Panc1 (cell line): ENCODE measurements at regions of chr20 and their contacts with region 1.

Region 1: DNA sequence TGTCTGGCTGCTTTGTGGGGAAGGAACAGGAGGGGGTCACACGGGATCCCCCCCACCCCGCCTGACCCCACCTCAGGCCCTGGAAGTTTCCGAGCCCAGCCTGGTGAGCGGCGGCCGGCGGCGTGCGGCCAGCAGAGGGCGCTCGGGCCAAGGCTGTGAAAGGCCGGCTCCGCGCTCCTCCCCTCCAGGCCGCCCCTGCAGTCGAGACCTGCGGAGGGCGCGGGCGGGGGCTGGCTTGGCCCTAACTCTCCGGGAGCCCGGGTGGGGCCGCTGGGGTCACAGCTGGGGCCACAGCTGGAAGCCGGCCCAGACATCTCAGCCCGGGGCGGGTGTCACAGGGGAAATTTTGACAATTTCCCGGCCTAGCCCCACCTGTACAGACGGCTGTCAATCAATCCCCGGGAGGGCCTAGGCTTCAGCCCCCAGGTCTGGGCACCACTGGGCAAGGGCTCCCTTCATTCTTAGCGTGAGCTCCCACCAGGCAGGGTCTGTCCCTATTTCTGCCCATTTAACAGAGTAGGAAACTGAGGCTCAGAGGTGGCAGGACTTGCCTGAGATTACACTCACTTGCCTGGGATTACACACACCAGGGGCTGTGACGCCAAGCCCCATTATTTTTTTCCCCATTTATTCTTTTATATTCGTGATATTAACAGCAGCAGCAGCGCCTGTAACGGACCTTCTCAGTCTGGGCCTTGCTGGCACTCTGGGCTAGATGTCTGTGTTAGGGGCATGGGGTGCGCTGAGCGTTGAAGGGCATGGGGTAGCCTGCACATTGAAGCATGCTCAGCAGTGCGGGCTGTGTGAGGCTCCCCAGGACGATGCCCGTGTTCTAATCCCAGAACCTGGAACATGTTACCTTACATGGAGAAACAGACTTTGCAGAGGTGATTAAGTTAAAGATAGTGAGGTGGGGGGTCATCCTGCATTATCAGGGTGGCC is 23.0 kb downstream of the ZBP1 start:
- DNase-seq: no peak
- ATAC-seq: peak; percentile 87
- H3K4me3 ChIP-seq: peak overlapping the region in 1 of 2 experiments; percentile 36; a peak in 3 of 4 replicates
- H3K27ac ChIP-seq: no peak overlapping the region
- H3K4me1 ChIP-seq: no peaks in the 10 kb centered on the region; the same call in 1 of the 2 replicates
- H3K27me3 ChIP-seq: no peaks in the 10 kb centered on the region
- CTCF ChIP-seq: peak; percentile 97

Region 2: DNA sequence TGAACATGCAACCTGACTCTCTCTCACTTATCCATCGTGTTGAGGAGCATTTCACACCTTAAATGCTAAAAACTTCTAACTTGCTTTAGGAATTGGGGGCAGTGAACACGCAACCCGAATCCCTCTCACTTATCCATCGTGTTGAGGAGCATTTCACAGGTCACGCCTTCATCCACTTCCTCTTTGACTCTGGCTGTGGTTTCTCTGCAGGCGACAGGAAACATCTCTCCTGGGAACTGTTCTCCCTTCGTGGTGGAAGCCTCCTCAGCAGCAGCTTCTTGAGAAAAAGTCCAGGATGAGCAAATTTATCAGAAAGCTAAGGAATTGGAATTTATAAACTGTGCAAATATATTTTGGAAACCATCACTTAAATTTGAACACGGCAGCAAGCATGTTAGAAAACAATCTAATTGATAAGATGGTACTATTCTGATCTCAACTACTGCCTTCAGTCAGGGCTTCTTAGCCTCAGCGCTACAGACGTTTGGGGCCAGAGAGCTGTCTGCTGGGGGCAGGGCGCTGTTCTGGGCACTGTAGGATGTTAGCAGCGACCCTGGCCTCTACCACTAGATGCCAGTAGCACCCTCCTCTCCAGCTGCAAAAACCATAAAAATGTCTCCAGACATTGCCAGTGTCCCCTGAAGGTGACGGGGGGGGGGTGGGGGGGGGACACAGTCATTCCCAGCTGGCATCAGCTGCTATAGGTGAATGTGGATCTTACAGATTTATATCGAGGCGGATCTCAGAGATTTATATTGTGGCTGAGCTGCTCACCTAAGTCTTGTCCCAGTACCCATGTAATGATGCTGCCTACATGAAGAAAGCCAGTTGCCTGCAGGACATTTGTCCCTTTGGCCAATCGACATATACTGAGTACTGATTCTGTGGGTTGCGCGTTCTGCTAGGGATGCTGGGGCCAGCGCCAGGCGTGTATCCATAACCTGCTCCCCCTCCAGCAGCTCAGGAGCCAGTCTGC is 98.6 kb before region 1 on chr20:
- CTCF ChIA-PET with region 1: interaction called, 11 read pairs
- POLR2A ChIA-PET with region 1: no interaction called
- in situ Hi-C with region 1: no loop called
- intact Hi-C with region 1: no loop called
- DNase-seq: no peak
- ATAC-seq: peak; percentile 85
- H3K4me3 ChIP-seq: no peak overlapping the region
- H3K27ac ChIP-seq: no peak overlapping the region
- H3K4me1 ChIP-seq: 0 out of 2 replicates have a peak, but pooled peaks cover 9% of the 10 kb centered on the region
- H3K27me3 ChIP-seq: no peaks in the 10 kb centered on the region
- CTCF ChIP-seq: peak; percentile 73

Region 3: GRCh38 chr20:57513199-57513598 is 84.1 kb before region 1 on chr20:
- CTCF ChIA-PET with region 1: interaction called, 3 read pairs
- POLR2A ChIA-PET with region 1: no interaction called
- in situ Hi-C with region 1: no loop called
- intact Hi-C with region 1: loop called (anchors 1 kb)
- DNase-seq: no peak
- ATAC-seq: no peak
- H3K4me3 ChIP-seq: no peak overlapping the region
- H3K27ac ChIP-seq: no peak overlapping the region
- H3K4me1 ChIP-seq: no peaks in the 10 kb centered on the region
- H3K27me3 ChIP-seq: no peaks in the 10 kb centered on the region
- CTCF ChIP-seq: no peak

Region 4: DNA sequence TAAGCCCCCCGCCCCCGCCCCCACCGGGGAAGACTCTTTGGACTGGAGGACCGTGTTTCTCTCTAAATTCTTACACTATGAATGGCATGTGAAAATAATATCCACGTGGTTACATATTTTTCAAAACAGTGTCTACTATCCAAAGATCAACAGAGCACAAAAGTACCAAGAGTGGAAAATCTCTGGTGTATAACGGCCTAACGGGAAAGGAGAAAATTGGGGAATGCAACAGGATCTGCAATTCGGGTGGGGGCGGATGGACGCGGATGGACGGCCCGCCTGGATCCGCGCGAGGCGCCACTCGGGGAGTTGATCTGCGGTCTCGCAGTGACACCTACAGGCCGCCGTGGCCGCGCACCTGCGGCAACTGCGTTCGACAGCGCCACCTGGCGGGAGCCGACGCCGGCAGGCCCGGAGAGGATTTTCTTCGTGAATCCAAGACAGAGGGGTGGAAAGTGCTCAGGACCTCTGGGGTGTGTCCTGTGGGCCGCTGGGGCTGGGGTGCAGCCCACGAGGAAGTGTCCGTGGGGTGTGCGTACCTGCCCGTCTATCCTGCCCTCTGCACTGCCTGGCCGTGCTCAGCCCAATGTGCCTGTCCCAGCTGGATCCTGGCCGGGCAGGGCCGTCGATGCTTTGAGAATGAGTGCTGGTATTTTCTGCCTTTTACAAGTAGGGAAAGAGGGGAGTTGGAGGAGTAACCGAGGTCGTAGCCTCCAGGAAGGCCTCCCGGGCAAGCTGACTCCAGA is 612.6 kb after region 1 on chr20:
- CTCF ChIA-PET with region 1: interaction called, 5 read pairs
- POLR2A ChIA-PET with region 1: no interaction called
- in situ Hi-C with region 1: no loop called
- intact Hi-C with region 1: loop called (anchors 1 kb)
- DNase-seq: peak; percentile 61
- ATAC-seq: peak; percentile 90
- H3K4me3 ChIP-seq: peak overlapping the region in 1 of 2 experiments; percentile 26; a peak in 1 of 4 replicates
- H3K27ac ChIP-seq: no peak overlapping the region
- H3K4me1 ChIP-seq: peaks cover 2% of the 10 kb centered on the region; the same call in 1 of the 2 replicates
- H3K27me3 ChIP-seq: no peaks in the 10 kb centered on the region
- CTCF ChIP-seq: peak; percentile 100